ENCODE measurements at regions of chr12 and their contacts with region 1.

Region 1: GRCh38 chr12:31238764-31239387 is 87.1 kb downstream of the SINHCAF start:
- DNase-seq: peak; percentile 61
- H3K4me3 ChIP-seq: no peak overlapping the region
- H3K27ac ChIP-seq: no peak overlapping the region
- H3K4me1 ChIP-seq: no peaks in the 10 kb centered on the region
- H3K27me3 ChIP-seq: peaks cover 5% of the 10 kb centered on the region
- CTCF ChIP-seq: peak; percentile 93 to 97

Region 2: DNA sequence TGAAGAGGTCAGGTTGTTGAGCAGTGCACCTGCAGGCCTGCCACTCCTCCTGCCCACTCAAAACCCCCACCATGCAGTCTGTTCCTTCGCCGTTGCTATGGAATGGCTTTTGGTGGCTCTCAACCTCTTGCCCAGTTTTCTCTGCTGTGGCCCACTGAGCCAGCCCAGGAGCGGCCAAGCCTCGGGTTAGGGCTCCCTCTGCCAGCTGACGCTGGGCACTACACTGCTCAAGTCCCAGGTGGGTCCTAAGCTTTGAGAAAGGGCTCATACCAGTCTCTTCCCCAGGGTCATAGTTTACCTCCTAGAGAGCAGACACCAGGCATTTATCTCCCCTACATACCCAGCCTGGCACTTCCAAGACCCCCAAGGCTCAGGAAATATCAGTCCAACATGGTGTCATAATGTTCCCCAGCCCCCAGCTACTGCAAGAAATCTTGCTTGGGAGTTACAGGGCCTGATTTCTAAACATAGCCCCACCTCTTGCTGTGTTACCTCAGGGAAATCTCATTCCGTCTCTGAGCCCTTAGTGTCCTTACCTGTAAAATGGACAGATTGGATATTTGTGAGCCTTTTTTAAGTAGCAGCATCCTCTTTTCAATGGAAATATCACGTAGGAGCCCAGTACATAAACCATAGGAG is 252.9 kb before region 1 on chr12:
- CTCF ChIA-PET with region 1: no interaction called
- dilution Hi-C with region 1: no loop called
- in situ Hi-C with region 1: no loop called
- intact Hi-C with region 1: loop called (anchors 5 kb)
- DNase-seq: peak; percentile 17
- H3K4me3 ChIP-seq: no peak overlapping the region
- H3K27ac ChIP-seq: no peak overlapping the region
- H3K4me1 ChIP-seq: no peaks in the 10 kb centered on the region
- H3K27me3 ChIP-seq: no peaks in the 10 kb centered on the region
- CTCF ChIP-seq: peak; percentile 70 to 93

Region 3: GRCh38 chr12:31117203-31118011 is 121.5 kb before region 1 on chr12:
- CTCF ChIA-PET with region 1: no interaction called
- dilution Hi-C with region 1: no loop called
- in situ Hi-C with region 1: loop called in 1 of 2 experiments (anchors 25 kb)
- intact Hi-C with region 1: loop called (anchors 1 kb)
- DNase-seq: peak; percentile 39
- H3K4me3 ChIP-seq: peak overlapping the region; percentile 41 to 57 (median 55)
- H3K27ac ChIP-seq: no peak overlapping the region
- H3K4me1 ChIP-seq: peaks cover 22% of the 10 kb centered on the region
- H3K27me3 ChIP-seq: peaks cover 20% of the 10 kb centered on the region
- CTCF ChIP-seq: peak; percentile 46 to 86

Region 4: GRCh38 chr12:31205054-31205453 is 33.8 kb before region 1 on chr12:
- CTCF ChIA-PET with region 1: no interaction called
- dilution Hi-C with region 1: loop called (anchors 5 kb)
- in situ Hi-C with region 1: no loop called
- intact Hi-C with region 1: no loop called
- DNase-seq: peak; percentile 94
- H3K4me3 ChIP-seq: no peak overlapping the region
- H3K27ac ChIP-seq: peak overlapping the region; percentile 90
- H3K4me1 ChIP-seq: peaks cover 47% of the 10 kb centered on the region
- H3K27me3 ChIP-seq: no peaks in the 10 kb centered on the region
- CTCF ChIP-seq: no peak

Region 5: DNA sequence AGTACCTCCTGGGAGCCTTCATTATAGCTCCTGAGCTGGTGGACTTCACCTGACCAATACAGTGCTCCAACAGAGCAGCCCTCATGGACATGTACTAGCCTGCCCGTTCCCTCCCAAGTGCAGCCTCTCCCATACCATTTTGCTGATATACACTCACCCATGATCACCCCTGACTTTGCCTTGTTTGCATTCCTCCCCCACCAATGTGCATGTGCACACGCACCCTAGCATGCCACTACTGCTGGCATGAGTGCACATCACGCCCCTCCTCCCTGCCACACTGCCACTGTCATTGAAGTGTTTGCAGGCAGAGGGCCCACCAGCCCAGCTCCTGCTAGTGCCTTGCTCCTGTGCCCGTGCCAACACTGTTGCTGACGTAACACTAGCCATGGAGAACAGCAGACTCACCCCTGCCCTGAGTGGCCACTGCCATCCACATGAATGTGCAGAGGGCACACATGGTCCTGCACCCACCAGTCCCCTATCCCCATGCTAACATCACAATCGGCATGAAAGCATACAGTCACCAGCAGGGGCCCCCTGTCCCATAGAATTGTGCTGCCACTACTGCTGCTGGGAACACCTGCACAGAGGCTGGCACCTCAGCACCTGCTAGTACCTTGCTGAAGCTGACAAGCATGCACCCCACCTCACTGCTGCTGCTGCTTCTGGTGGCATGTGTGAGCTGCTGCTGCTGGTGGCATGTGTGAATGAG is 23.2 kb before region 1 on chr12:
- CTCF ChIA-PET with region 1: no interaction called
- dilution Hi-C with region 1: no loop called
- in situ Hi-C with region 1: no loop called
- intact Hi-C with region 1: loop called (anchors 2 kb)
- DNase-seq: peak; percentile 76
- H3K4me3 ChIP-seq: no peak overlapping the region
- H3K27ac ChIP-seq: no peak overlapping the region
- H3K4me1 ChIP-seq: peaks cover 17% of the 10 kb centered on the region
- H3K27me3 ChIP-seq: peaks cover 5% of the 10 kb centered on the region
- CTCF ChIP-seq: peak in 1 of 2 donors; percentile 14